ENCODE measurements at regions of chr11 and their contacts with region 1.

Region 1: DNA sequence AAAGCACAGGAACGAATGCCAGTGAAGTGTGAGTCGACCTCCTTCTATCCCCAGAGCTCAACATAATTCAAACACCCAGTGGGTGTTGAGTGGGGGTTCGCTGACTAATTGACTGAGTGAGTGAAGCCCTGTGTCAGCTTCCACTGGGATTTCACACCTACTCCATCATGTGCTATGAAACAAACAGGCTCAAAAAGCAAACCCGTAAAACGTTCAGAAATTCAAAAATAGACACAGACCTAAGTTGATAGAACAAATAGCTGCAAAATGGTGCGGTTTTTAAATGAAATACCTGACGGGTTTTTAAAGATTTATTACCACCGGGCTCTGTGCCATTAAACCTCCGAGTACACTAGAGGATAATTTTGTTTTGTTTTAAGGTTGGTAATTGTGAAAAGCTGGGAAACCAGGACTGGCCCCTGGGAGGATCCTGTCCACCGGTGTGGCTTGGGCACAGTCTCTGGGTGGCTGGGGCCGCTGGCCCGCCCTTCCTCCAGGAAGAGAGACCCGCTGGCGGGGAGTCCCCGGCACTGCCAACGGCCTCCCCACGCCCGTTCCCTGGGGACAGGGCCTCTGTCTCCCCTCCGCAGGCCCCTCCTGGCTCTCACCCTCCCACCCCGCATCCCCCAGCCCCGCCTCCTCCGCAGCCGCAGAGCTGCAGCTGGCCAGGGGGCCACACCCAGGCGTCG is 13.6 kb downstream of the KCNJ5 start:
- DNase-seq: no peak

Region 2: DNA sequence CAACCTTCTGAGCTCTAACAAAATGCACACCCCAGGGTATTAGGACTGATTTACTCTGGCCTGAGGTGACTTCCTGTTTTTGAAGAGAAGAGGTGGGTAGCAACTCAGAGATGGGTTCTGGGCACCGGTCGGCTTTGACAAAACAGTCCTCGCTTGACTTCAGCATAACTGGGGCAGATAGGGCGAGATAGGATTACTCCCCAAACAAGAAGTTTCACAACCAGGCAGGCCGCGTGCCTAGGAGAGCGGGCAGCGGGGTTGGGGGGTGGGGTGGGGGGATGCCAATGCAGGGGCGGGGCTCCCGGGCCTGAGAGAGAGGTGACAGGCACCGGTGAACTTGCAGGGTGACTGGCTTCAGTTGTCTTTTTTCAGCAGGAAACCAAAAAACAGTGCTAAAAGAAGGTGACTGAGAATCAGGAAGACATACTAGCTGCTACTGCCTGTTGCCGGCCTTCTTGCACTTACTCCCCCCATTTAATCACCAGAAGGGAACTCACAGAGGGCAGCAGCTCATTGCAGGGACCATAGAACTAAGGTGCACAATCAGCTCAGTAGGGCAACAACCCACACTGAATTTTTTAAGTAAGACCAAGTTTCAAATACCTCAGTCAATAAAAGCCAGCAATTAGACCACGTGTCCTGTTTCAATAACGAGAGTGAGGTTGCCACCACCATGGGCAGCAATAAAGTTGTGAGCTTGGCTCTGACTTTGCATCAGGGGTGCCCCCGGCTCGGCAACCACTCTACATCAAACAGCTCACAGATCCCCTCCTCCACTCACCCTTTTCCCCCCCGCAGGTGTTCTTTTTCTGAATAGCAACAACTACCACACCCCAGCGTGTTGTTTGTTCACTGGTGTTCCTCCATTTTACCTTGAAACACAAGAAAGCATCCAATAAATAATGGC is 280.3 kb before region 1 on chr11:
- intact Hi-C with region 1: no loop called
- DNase-seq: no peak

Region 3: GRCh38 chr11:128942817-128943427 is 38.1 kb after region 1 on chr11 and contains the start of gene TP53AIP1:
- intact Hi-C with region 1: loop called (anchors 5 kb)
- DNase-seq: peak in 1 of 10 donors; percentile 72